GM12878 (cell line): ENCODE measurements at regions of chr7 and their contacts with region 1.

Region 1: DNA sequence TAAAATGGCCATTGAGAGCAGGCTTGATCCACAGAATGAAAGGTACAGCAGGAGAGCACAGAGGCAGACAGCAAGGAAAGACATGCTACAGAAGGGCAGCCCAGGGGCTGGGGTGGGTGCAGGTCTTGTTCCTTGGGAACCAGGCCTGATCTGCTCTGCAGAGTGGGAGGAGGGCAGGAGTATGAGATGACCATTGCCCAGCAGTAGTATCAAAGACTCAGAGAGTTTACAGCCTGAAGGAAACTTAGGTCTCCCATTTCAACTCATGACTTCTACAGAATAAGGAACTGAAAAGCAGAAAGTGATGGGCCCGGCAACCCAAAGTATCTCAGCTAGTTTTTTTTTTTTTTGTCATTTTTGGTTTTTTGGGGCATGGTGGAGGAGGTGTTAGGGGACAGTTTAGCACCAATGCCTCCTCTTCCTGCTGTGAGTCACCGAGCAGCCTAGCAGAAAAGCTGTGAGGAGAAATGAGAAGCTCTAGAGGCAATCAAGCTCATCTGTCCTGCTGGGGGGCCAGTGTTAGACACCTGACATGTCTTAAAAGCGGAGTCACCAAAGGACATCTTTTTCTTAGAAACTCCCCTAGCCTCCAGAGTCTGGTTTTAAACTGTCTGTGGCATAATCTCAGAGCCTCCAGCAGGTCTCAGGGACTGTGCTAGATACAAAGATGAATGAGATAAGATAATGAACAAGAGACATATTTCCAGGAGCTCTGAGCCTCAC is 34.3 kb upstream of the HERPUD2 start:
- DNase-seq: peak; percentile 96
- ATAC-seq: peak; percentile 80
- H3K4me3 ChIP-seq: peak overlapping the region; percentile 61
- H3K27ac ChIP-seq: peak overlapping the region; percentile 95
- H3K4me1 ChIP-seq: peaks cover 52% of the 10 kb centered on the region
- H3K27me3 ChIP-seq: no peaks in the 10 kb centered on the region
- CTCF ChIP-seq: no peak
- EP300 ChIP-seq: peak; percentile 96 to 99
- POLR2A ChIP-seq: peak; percentile 61
- RAD21 ChIP-seq: no peak; the same call in none of the 2 replicates

Region 2: DNA sequence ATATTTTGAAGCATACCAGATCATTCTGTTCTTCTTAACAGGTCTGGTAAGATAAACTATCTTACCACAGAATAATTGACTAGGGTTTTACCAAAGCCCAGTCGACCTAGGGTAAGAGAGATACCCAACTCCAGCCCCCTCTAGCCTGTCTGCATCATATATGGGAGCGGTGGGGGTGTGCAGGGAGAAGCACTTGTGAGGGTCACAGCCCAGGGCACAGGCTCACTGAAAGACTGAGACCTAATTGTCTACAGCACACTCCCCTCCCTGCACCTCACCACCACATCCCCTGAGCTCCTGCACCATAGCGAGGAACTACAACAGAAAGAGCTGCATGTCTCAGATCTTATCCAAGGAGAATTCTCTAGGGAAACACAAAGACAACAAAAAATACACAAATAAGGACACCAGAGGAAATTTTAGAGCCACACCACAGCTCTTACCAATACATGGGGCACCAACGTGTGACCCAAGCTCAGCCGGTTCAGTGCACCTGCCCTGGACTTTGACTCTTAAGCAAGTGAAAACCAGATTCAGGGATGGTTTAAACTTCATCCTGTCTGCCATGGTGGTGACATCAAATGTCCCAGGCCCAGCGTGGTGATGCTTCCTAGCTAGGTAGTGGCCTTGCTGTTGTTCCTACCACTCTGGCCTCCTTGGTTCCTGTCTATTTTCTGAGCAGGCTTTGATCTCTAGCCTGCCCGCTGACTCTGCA is 185.0 kb before region 1 on chr7:
- CTCF ChIA-PET with region 1: no interaction called
- POLR2A ChIA-PET with region 1: interaction called, 12 read pairs
- RAD21 ChIA-PET with region 1: no interaction called
- SMC1A ChIA-PET with region 1: no interaction called
- in situ Hi-C with region 1: no loop called
- intact Hi-C with region 1: no loop called
- DNase-seq: no peak
- ATAC-seq: peak; percentile 53
- H3K4me3 ChIP-seq: no peak overlapping the region
- H3K27ac ChIP-seq: no peak overlapping the region
- H3K4me1 ChIP-seq: no peaks in the 10 kb centered on the region
- H3K27me3 ChIP-seq: peaks cover 0 to 2% of the 10 kb centered on the region in 2 experiments; a peak in 2 of 4 replicates
- CTCF ChIP-seq: no peak
- EP300 ChIP-seq: no peak
- POLR2A ChIP-seq: no peak
- RAD21 ChIP-seq: no peak

Region 3: DNA sequence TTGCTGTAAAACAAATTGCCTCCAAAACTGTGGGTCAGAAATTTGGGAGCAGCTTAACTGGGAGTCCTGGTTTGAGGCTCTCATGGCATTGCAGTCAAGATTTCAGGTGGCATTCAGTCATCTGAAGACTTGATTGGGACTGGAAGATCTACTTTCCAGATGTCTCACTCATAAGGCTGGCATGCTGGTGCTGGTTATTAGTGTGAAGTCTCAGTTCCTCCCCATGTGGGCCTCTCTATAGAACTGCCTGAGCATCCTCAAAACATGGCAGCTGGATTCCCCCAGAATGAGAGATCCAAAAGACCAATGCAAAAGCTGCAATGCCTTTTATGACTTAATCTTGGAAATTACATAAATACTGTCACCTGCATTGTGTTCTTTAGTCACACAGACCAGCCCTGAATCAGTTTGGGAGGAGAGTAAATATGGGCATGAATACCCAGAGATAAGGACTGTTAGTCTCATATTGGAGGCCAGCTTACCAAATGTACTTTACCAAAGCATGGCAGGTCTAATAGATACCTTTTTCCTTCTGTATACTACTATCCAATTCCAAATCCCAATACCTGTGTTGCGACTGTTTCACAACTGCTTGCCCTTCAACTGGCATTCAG is 27.8 kb before region 1 on chr7:
- CTCF ChIA-PET with region 1: interaction called, 16 read pairs
- POLR2A ChIA-PET with region 1: interaction called, 3 read pairs
- RAD21 ChIA-PET with region 1: interaction called, 152 read pairs
- SMC1A ChIA-PET with region 1: interaction called, 337 read pairs
- in situ Hi-C with region 1: no loop called
- intact Hi-C with region 1: no loop called
- DNase-seq: no peak
- ATAC-seq: peak; percentile 92
- H3K4me3 ChIP-seq: no peak overlapping the region
- H3K27ac ChIP-seq: no peak overlapping the region
- H3K4me1 ChIP-seq: no peaks in the 10 kb centered on the region
- H3K27me3 ChIP-seq: no peaks in the 10 kb centered on the region
- CTCF ChIP-seq: no peak
- EP300 ChIP-seq: no peak
- POLR2A ChIP-seq: no peak
- RAD21 ChIP-seq: no peak

Region 4: DNA sequence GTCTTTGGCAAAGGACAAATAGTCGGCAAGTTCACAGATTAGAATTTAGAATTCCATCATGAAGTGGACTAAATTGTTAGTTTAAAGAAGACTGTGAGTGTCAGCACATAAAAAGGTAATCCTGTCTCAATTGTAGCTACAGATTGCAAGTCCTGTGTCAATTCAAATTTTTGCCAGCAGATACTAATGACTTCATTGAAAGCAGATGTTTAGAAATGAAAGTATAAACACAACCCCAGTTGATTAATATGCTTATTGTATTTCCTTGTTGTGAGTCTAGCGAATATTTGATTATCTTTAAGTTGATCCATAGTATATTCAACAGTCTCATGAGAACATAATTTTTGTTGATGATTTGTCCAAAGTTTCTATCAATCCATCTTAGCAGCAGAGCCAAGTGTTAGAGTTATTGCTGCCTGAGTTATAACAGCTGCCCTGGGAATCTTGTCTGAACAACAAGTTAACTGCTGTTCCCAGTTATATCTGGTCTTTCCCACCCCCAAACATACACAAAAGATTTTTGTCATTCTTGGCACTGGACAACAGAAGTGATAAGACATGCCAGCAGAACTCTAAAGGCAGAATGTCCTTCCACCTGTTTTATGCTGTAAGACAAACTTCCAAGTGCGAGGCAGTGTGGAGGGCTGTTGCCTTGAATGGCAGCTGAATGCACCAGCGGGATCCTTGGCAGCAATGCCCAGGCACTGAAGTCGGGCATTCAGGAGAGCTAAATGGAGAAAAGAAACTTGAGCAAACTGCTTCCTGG is 13.0 kb before region 1 on chr7:
- CTCF ChIA-PET with region 1: interaction called, 211 read pairs
- POLR2A ChIA-PET with region 1: interaction called, 53 read pairs
- RAD21 ChIA-PET with region 1: interaction called, 96 read pairs
- SMC1A ChIA-PET with region 1: interaction called, 337 read pairs
- in situ Hi-C with region 1: no loop called
- intact Hi-C with region 1: no loop called
- DNase-seq: no peak
- ATAC-seq: no peak
- H3K4me3 ChIP-seq: no peak overlapping the region
- H3K27ac ChIP-seq: no peak overlapping the region
- H3K4me1 ChIP-seq: peaks cover 7% of the 10 kb centered on the region
- H3K27me3 ChIP-seq: no peaks in the 10 kb centered on the region
- CTCF ChIP-seq: no peak
- EP300 ChIP-seq: no peak
- POLR2A ChIP-seq: no peak
- RAD21 ChIP-seq: no peak

Region 5: GRCh38 chr7:35801392-35802101 is 72.3 kb after region 1 on chr7:
- CTCF ChIA-PET with region 1: interaction called, 99 read pairs
- POLR2A ChIA-PET with region 1: interaction called, 124 read pairs
- RAD21 ChIA-PET with region 1: interaction called, 273 read pairs
- SMC1A ChIA-PET with region 1: interaction called, 180 read pairs
- in situ Hi-C with region 1: loop called (anchors 5 kb)
- intact Hi-C with region 1: loop called (anchors 1 kb)
- DNase-seq: no peak
- ATAC-seq: peak; percentile 55
- H3K4me3 ChIP-seq: peak overlapping the region; percentile 95
- H3K27ac ChIP-seq: peak overlapping the region; percentile 99
- H3K4me1 ChIP-seq: peaks cover 11% of the 10 kb centered on the region; the same call in 1 of the 2 replicates
- H3K27me3 ChIP-seq: no peaks in the 10 kb centered on the region
- CTCF ChIP-seq: peak; percentile 38 to 48 (median 40)
- EP300 ChIP-seq: no peak
- POLR2A ChIP-seq: peak; percentile 71
- RAD21 ChIP-seq: peak; percentile 31; the same call in 1 of the 2 replicates

Region 6: GRCh38 chr7:36280840-36281812 is 551.9 kb after region 1 on chr7:
- CTCF ChIA-PET with region 1: no interaction called
- POLR2A ChIA-PET with region 1: no interaction called
- RAD21 ChIA-PET with region 1: interaction called, 4 read pairs
- SMC1A ChIA-PET with region 1: no interaction called
- in situ Hi-C with region 1: no loop called
- intact Hi-C with region 1: loop called (anchors 10 kb)
- DNase-seq: no peak
- ATAC-seq: peak; percentile 48
- H3K4me3 ChIP-seq: no peak overlapping the region
- H3K27ac ChIP-seq: no peak overlapping the region
- H3K4me1 ChIP-seq: peaks cover 16% of the 10 kb centered on the region
- H3K27me3 ChIP-seq: no peaks in the 10 kb centered on the region; a peak in 1 of 4 replicates
- CTCF ChIP-seq: no peak
- EP300 ChIP-seq: no peak
- POLR2A ChIP-seq: no peak
- RAD21 ChIP-seq: no peak